ENCODE measurements at regions of chr12 and their contacts with region 1.

Region 1: DNA sequence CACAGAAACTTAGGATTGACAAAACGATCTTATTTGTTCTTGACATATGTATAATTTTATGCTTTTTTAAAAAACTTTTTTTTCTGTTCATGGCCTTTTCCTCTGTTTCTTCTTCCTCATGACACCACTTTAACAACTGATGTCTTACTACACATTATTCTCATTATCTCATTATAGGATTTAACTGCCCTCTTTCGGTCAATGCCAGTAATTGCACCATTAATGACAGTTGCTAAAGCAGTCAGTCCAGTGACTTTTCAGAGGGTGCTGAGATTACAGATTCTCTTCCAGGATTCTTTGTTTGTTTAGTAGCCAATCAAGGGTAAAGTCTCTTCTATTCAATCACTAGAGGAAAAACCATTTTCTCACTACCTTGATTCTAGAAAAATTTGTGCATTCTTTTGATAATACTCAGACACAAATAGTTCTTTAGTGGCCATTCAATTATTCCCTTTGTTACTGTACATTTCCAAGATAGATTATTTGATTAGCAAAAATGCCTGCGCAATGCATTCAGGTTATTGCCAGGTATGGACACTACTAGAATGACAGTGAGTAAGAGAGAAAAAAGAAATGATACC is 50.1 kb downstream of the KLRG1 start:
- DNase-seq: no peak
- ATAC-seq: peak in 7 of 8 donors; percentile 61 to 82 (median 75)
- H3K4me3 ChIP-seq: no peak overlapping the region
- H3K27ac ChIP-seq: no peak overlapping the region
- H3K4me1 ChIP-seq: peaks cover 0 to 16% (median 0%) of the 10 kb centered on the region in 9 donors
- H3K27me3 ChIP-seq: no peaks in the 10 kb centered on the region
- CTCF ChIP-seq: peak; percentile 51 to 83 (median 77)

Region 2: GRCh38 chr12:8549381-8549780 is 490.1 kb before region 1 on chr12:
- intact Hi-C with region 1: loop called in 3 of 10 experiments (anchors 5 to 10 kb)
- DNase-seq: no peak
- ATAC-seq: no peak
- H3K4me3 ChIP-seq: no peak overlapping the region
- H3K27ac ChIP-seq: no peak overlapping the region
- H3K4me1 ChIP-seq: peaks cover 0 to 5% (median 0%) of the 10 kb centered on the region in 9 donors
- H3K27me3 ChIP-seq: peaks cover 0 to 5% (median 0%) of the 10 kb centered on the region in 7 donors
- CTCF ChIP-seq: no peak

Region 3: GRCh38 chr12:8780389-8780788 is 259.1 kb before region 1 on chr12:
- intact Hi-C with region 1: loop called in 1 of 10 experiments (anchors 5 kb)
- DNase-seq: no peak
- ATAC-seq: peak in 1 of 8 donors; percentile 56
- H3K4me3 ChIP-seq: no peak overlapping the region
- H3K27ac ChIP-seq: no peak overlapping the region
- H3K4me1 ChIP-seq: peaks cover 0 to 32% (median 12%) of the 10 kb centered on the region in 9 donors
- H3K27me3 ChIP-seq: no peaks in the 10 kb centered on the region
- CTCF ChIP-seq: peak in 7 of 9 donors; percentile 20 to 55 (median 35)

Region 4: GRCh38 chr12:8849876-8850275 is 189.6 kb before region 1 on chr12:
- intact Hi-C with region 1: no loop called
- DNase-seq: no peak
- ATAC-seq: no peak
- H3K4me3 ChIP-seq: no peak overlapping the region
- H3K27ac ChIP-seq: no peak overlapping the region
- H3K4me1 ChIP-seq: peaks cover 0 to 14% (median 2%) of the 10 kb centered on the region in 9 donors
- H3K27me3 ChIP-seq: no peaks in the 10 kb centered on the region
- CTCF ChIP-seq: no peak

Region 5: GRCh38 chr12:8949342-8950220 is 89.9 kb before region 1 on chr12 and contains the start of gene M6PR:
- intact Hi-C with region 1: loop called in 8 of 10 experiments (anchors 1 to 5 kb)
- DNase-seq: peak; percentile 92 to 95
- ATAC-seq: peak; percentile 94 to 98 (median 96)
- H3K4me3 ChIP-seq: peak within 1 kb of the TSS; percentile 54 to 89 (median 75)
- H3K27ac ChIP-seq: peak within 1 kb of the TSS; percentile 86 to 98 (median 96)
- H3K4me1 ChIP-seq: peaks cover 7 to 46% (median 27%) of the 10 kb centered on the region in 9 donors
- H3K27me3 ChIP-seq: no peaks in the 10 kb centered on the region
- CTCF ChIP-seq: peak in 8 of 9 donors; percentile 26 to 82 (median 62)
- total RNA-seq, gene M6PR: 85.5 to 133 (median 104) TPM

Region 6: DNA sequence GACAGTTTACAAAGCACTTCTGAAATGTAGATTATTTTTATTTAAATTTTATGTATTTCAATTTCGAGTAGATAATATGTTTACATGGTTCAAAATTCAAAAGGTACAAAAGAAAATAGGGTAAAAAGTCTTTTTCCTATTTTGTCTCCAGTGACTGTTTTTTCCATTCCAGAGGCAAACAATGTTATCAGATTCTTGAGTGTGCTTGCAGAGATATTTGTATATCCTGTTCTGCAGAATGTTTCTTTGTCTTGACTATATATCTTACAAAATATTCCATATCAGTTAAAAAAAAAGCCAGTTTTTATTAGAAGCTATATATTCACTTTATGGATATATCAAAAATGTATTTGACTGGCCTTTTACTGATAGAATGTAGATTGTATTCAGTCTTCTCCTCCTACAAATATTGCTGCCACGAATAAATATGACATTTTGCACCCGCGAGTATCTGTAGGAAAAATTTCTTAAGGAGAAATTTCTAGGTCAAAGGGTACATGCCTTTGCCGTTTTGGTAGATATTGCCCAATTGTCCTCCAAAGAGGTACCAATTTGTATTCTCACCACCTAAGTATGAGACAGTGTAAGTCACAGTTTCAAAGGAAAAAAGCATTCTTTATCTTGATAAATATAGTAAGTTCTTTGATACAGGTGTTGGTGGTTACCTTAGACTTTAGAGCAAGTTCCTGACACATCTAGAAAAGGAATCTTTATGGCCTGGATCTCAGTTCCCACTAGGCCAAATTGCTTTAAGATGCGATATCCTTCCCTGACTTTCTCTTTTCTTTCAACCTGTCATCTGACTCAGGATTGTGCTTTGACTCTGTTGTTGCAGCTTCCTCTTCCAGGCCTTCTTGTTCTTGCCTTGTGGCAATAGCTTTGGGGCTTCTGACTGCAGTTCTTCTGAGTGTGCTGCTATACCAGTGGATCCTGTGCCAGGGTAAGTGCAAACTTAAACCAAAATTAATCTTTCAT is 47.8 kb before region 1 on chr12:
- intact Hi-C with region 1: loop called in 1 of 10 experiments (anchors 5 kb)
- DNase-seq: no peak
- ATAC-seq: no peak
- H3K4me3 ChIP-seq: peak overlapping the region in 1 of 10 donors; percentile 32
- H3K27ac ChIP-seq: peak overlapping the region in 6 of 10 donors; percentile 41 to 66 (median 58)
- H3K4me1 ChIP-seq: peaks cover 0 to 62% (median 41%) of the 10 kb centered on the region in 9 donors
- H3K27me3 ChIP-seq: no peaks in the 10 kb centered on the region
- CTCF ChIP-seq: no peak

Region 7: DNA sequence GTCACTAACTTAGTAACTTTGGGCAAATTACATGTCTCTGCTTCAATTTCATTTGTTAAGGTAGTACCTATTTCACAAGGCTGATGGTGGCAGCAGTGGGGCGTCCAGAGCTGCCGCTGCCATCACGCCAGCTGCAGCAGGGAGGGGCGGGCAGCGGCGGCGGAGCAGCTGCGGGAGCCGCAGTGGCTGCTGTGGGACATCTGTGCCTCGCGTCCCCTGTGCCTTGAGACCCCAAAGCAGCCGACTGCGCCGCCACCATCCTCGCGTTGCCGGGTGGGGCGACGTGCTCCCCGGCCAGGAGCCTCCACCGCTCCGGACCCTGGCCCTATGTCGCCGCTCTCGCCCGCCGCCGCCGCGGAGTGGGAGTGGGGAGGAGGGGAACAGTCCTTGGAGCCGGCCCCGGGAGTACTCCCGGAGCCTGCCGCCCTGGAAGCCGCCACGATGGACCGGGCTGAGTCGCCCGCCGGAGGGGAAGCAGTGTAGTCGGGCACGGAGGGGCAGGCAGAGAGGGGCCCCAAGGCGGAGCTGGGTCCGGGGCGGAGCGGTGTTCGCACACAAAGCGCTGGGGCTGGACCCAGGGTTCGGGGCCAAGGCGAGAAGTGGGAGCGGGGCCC is 24.8 kb after region 1 on chr12:
- intact Hi-C with region 1: no loop called
- DNase-seq: peak; percentile 61
- ATAC-seq: peak; percentile 77 to 88 (median 87)
- H3K4me3 ChIP-seq: peak overlapping the region; percentile 70 to 98 (median 92)
- H3K27ac ChIP-seq: peak overlapping the region; percentile 94 to 99 (median 98)
- H3K4me1 ChIP-seq: peaks cover 4 to 24% (median 14%) of the 10 kb centered on the region in 9 donors
- H3K27me3 ChIP-seq: no peaks in the 10 kb centered on the region
- CTCF ChIP-seq: peak in 8 of 9 donors; percentile 40 to 68 (median 54)